ENCODE measurements at regions of chr15 and their contacts with region 1.

Region 1: GRCh38 chr15:40301467-40302179 is 6.1 kb downstream of the PLCB2 start:
- DNase-seq: peak; percentile 71
- ATAC-seq: peak; percentile 96
- H3K4me3 Mint-ChIP-seq: peak overlapping the region; percentile 22
- H3K27ac Mint-ChIP-seq: no peak overlapping the region
- H3K4me1 Mint-ChIP-seq: peaks cover 24% of the 10 kb centered on the region
- H3K27me3 Mint-ChIP-seq: no peaks in the 10 kb centered on the region; the same call in 1 of the 2 replicates
- CTCF ChIP-seq: no peak

Region 2: GRCh38 chr15:40323239-40323952 is 21.8 kb after region 1 on chr15 and contains the start of gene INAFM2:
- CTCF ChIA-PET with region 1: interaction called, 104 read pairs
- POLR2A ChIA-PET with region 1: interaction called, 4 read pairs
- DNase-seq: peak; percentile 96
- ATAC-seq: peak; percentile 82
- H3K4me3 Mint-ChIP-seq: peak within 1 kb of the TSS; percentile 68
- H3K27ac Mint-ChIP-seq: no peak within 1 kb of the TSS
- H3K4me1 Mint-ChIP-seq: peaks cover 62% of the 10 kb centered on the region
- H3K27me3 Mint-ChIP-seq: peaks cover 25% of the 10 kb centered on the region
- CTCF ChIP-seq: no peak
- total RNA-seq, gene INAFM2: 28.2 to 34.2 TPM (median 30.3 TPM) in 3 replicates